Dorsolateral prefrontal cortex (tissue), 120 donors: ENCODE measurements at regions of chr22 and their contacts with region 1.

Region 1: GRCh38 chr22:25554238-25554671 is 10.2 kb upstream of the GRK3 start:
- DNase-seq: no peak
- H3K4me3 ChIP-seq: no peak overlapping the region
- H3K27ac ChIP-seq: no peak overlapping the region
- H3K27me3 ChIP-seq: no peaks in the 10 kb centered on the region
- CTCF ChIP-seq: no peak

Region 2: GRCh38 chr22:25680956-25681355 is 126.7 kb after region 1 on chr22:
- intact Hi-C with region 1: loop called in 1 of 2 experiments (anchors 10 kb)
- DNase-seq: no peak
- H3K4me3 ChIP-seq: no peak overlapping the region
- H3K27ac ChIP-seq: peak overlapping the region in 1 of 59 donors; percentile 11
- H3K27me3 ChIP-seq: no peaks in the 10 kb centered on the region
- CTCF ChIP-seq: no peak